WTC11 (cell line): ENCODE measurements at regions of chr2 and their contacts with region 1.

Region 1: DNA sequence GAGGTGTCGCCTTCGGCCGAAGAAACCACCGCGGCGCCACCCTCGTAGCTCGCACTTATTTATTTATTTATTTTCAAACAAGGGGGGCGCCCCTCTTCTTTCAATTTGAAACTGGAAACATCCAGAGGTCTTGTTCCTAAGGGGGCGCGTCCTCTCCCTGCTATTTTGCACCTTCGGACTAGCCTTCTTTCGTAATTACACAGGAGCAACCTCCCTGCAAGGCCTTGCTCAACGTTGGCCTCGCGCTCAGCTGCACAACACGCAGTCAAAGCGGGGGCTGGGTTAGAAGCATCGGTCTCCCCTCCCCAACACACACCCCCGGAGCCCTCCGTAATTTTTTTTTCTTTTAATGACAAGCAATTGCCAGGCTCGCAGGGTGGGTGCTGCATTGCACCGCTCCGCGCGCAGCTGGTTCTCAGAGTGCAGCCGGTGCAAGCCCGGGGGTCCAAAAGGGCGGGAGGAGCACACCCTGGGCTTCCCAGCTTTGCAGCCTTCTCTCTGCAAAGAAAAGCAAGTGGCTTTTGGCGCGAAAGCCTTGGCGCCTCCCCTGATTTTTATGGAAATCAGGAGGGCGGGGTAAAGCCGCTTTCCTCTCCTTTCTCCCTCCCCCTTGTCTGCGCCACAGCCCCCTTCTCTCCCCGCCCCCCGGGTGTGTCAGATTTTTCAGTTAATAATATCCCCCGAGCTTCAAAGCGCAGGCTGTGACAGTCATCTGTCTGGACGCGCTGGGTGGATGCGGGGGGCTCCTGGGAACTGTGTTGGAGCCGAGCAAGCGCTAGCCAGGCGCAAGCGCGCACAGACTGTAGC is at the start of gene MYCN:
- DNase-seq: peak; percentile 90
- ATAC-seq: peak; percentile 54
- H3K4me3 Mint-ChIP-seq: peak within 1 kb of the TSS; percentile 94
- H3K27ac Mint-ChIP-seq: peak within 1 kb of the TSS; percentile 92
- H3K4me1 Mint-ChIP-seq: peaks cover 56% of the 10 kb centered on the region
- H3K27me3 Mint-ChIP-seq: no peaks in the 10 kb centered on the region
- CTCF ChIP-seq: no peak; the same call in 1 of the 2 replicates
- total RNA-seq, gene MYCN: 68.3 to 77.5 TPM (median 75.3 TPM) in 3 replicates

Region 2: DNA sequence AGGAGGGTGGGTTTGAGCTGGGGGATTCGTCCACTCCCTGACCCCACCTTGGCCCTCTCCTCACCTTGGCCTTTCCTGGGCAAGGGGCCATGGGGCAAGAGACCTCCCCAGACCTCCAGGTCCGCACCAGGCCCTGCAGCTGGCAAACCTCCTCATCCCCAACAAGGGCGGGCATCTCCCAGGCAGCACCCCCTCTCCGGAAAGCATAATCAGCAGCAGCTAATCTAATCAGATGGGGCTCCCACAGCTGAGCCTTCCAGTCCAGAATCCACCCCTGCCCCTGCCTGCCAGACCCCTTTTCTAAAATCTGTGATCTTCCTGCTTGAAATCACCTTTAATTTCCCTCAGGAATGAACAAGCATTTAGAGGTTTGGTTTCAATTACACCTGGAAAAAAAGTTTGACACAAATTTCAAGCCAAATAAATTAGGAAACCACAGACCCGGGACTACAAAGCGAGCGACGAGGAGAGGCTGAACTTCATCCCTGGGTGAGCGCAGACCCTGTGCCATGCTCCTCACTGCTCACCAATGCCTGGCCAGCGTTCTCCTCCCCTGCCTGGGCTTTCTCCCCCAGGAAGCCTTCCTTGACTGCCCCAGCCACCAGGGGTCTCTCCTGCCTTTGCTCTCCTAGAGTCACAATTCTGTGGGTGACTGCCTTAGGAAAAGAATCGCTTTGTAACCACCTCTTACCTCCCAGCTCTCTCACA is 142.7 kb before region 1 on chr2:
- CTCF ChIA-PET with region 1: interaction called, 24 read pairs
- POLR2A ChIA-PET with region 1: interaction called, 3 read pairs
- DNase-seq: peak; percentile 72
- ATAC-seq: peak; percentile 88
- H3K4me3 Mint-ChIP-seq: no peak overlapping the region
- H3K27ac Mint-ChIP-seq: no peak overlapping the region
- H3K4me1 Mint-ChIP-seq: peaks cover 21% of the 10 kb centered on the region
- H3K27me3 Mint-ChIP-seq: no peaks in the 10 kb centered on the region
- CTCF ChIP-seq: no peak; the same call in 1 of the 2 replicates

Region 3: GRCh38 chr2:15955295-15956166 is 15.5 kb after region 1 on chr2:
- CTCF ChIA-PET with region 1: interaction called, 20 read pairs
- POLR2A ChIA-PET with region 1: interaction called, 5 read pairs
- DNase-seq: no peak
- ATAC-seq: no peak
- H3K4me3 Mint-ChIP-seq: no peak overlapping the region
- H3K27ac Mint-ChIP-seq: no peak overlapping the region
- H3K4me1 Mint-ChIP-seq: peaks cover 64% of the 10 kb centered on the region
- H3K27me3 Mint-ChIP-seq: no peaks in the 10 kb centered on the region
- CTCF ChIP-seq: no peak

Region 4: DNA sequence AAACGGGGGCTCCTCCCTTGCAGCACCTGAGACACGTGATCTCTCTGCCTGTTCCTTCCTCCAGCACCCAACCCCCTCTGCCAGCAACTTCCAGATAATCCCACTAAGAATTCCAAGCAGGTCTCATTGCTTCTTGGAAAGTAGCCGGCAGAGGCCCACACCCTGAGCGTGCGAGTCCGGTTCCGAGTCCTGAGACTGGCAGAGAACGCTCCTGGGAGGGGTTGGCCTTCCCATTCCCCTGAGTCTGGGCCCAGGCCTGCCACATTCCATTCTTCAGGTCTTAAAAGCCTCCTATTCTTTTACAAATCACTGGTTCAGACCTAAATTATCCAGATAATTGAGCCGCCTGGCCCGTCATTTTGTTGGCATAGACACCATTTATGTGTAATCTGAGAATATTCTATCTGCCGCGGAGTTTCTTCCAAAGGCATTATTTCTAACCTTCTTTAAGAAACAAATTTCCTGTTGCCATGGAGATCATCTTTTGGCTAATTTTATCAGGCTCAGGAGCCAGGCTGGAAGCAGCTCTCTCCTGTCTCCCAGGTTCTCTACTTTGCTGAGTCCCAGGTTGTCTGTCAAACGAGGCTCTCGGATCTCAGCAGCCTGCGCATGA is 165.7 kb after region 1 on chr2:
- CTCF ChIA-PET with region 1: interaction called, 34 read pairs
- POLR2A ChIA-PET with region 1: interaction called, 30 read pairs
- DNase-seq: peak; percentile 89
- ATAC-seq: peak; percentile 89
- H3K4me3 Mint-ChIP-seq: peak overlapping the region; percentile 57
- H3K27ac Mint-ChIP-seq: peak overlapping the region; percentile 97
- H3K4me1 Mint-ChIP-seq: peaks cover 76% of the 10 kb centered on the region
- H3K27me3 Mint-ChIP-seq: no peaks in the 10 kb centered on the region
- CTCF ChIP-seq: no peak

Region 5: DNA sequence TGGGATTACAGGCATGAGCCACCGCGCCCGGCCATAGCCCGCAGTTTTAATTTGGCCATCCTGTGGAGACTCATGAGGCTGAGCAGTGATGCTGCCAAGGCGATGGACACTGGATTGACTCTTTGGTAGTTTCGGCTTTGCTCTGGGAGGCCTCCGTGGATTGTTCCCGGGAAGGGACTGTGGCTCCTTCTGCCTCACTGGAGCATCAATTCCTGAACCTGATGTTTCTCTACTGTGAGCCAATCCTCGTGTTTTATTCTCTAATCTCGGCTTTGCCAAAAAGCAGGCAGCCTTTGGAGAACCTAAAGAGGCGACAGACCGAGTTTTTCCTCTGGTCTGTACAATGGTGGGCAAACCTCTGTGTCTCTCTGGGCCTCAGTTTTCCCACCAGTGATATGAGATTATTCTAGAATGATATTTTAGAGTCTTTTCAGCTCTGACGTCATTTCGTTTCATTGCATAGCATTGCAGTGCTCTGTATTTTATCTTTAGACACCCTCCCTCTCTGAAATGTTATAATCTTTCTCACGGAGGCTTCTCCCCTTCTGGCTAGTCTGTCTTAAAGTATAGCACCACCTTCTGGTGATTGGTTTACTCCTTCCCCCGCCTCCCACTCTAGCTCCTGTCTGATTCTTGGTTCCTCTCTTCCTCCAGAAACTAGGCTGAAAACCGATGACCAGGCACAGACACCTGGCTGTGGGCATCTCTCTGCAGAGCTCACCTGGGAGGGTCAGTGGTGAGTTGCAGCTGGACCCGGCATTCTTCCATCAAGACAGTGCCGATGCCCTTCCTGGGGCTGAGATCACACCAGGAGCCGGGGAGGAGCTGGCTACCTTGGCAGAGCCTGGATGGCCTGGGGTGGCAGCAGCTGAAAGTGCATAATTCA is 341.6 kb after region 1 on chr2:
- CTCF ChIA-PET with region 1: interaction called, 55 read pairs
- POLR2A ChIA-PET with region 1: interaction called, 3 read pairs
- DNase-seq: peak; percentile 53
- ATAC-seq: peak; percentile 96
- H3K4me3 Mint-ChIP-seq: no peak overlapping the region
- H3K27ac Mint-ChIP-seq: no peak overlapping the region
- H3K4me1 Mint-ChIP-seq: peaks cover 13% of the 10 kb centered on the region
- H3K27me3 Mint-ChIP-seq: no peaks in the 10 kb centered on the region; the same call in 1 of the 2 replicates
- CTCF ChIP-seq: no peak

Region 6: GRCh38 chr2:16321872-16322271 is 381.8 kb after region 1 on chr2:
- CTCF ChIA-PET with region 1: interaction called, 20 read pairs
- POLR2A ChIA-PET with region 1: interaction called, 3 read pairs
- DNase-seq: no peak
- ATAC-seq: peak; percentile 63
- H3K4me3 Mint-ChIP-seq: no peak overlapping the region
- H3K27ac Mint-ChIP-seq: no peak overlapping the region
- H3K4me1 Mint-ChIP-seq: peaks cover 32% of the 10 kb centered on the region
- H3K27me3 Mint-ChIP-seq: peaks cover 3% of the 10 kb centered on the region; the same call in 1 of the 2 replicates
- CTCF ChIP-seq: no peak